ENCODE measurements at regions of chr20 and their contacts with region 1.

Region 1: GRCh38 chr20:25470045-25470444 is 62.6 kb downstream of the GINS1 start:
- DNase-seq: peak; percentile 42 to 70 (median 54)
- ATAC-seq: peak; percentile 94
- H3K4me3 ChIP-seq: no peak overlapping the region
- H3K27ac ChIP-seq: no peak overlapping the region
- H3K4me1 ChIP-seq: peaks cover 7 to 12% of the 10 kb centered on the region in 2 experiments; a peak in 4 of 5 replicates
- H3K27me3 ChIP-seq: peaks cover 2 to 10% of the 10 kb centered on the region in 2 experiments; a peak in 4 of 5 replicates
- CTCF ChIP-seq: peak; percentile 61 to 77 (median 70)
- EP300 ChIP-seq: no peak
- POLR2A ChIP-seq: no peak
- RAD21 ChIP-seq: peak; percentile 52 to 78

Region 2: GRCh38 chr20:25399037-25399430 is 71.0 kb before region 1 on chr20:
- CTCF ChIA-PET with region 1: no interaction called
- POLR2A ChIA-PET with region 1: no interaction called
- in situ Hi-C with region 1: no loop called
- intact Hi-C with region 1: no loop called
- DNase-seq: peak; percentile 21 to 60 (median 28)
- ATAC-seq: peak; percentile 87
- H3K4me3 ChIP-seq: no peak overlapping the region
- H3K27ac ChIP-seq: no peak overlapping the region
- H3K4me1 ChIP-seq: no peaks in the 10 kb centered on the region; a peak in 1 of 5 replicates
- H3K27me3 ChIP-seq: no peaks in the 10 kb centered on the region
- CTCF ChIP-seq: peak; percentile 46 to 66 (median 48); a peak in 5 of 6 replicates
- EP300 ChIP-seq: no peak
- POLR2A ChIP-seq: no peak
- RAD21 ChIP-seq: peak; percentile 68 to 80

Region 3: DNA sequence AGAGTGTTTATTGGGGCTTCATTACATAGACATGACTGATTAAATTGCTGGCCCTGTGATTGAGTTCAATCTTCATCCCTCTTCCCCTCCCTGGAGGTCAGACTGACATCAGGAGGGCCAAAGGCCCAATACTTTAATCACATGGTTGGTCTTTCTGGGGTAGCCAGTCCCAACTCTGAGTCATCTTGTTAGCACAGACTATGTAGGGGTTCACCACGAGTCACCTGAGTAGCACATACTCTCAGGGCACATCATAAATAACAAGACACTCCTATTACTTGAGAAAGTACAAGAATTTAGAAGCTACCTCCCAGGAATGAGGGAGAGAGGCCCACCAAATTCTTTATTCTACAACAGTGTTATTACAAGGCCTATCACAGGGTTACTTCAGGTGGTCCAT is 51.3 kb before region 1 on chr20:
- CTCF ChIA-PET with region 1: no interaction called
- POLR2A ChIA-PET with region 1: no interaction called
- in situ Hi-C with region 1: no loop called
- intact Hi-C with region 1: no loop called
- DNase-seq: no peak
- ATAC-seq: no peak
- H3K4me3 ChIP-seq: no peak overlapping the region
- H3K27ac ChIP-seq: no peak overlapping the region
- H3K4me1 ChIP-seq: no peaks in the 10 kb centered on the region
- H3K27me3 ChIP-seq: no peaks in the 10 kb centered on the region
- CTCF ChIP-seq: no peak
- EP300 ChIP-seq: no peak
- POLR2A ChIP-seq: no peak
- RAD21 ChIP-seq: no peak

Region 4: DNA sequence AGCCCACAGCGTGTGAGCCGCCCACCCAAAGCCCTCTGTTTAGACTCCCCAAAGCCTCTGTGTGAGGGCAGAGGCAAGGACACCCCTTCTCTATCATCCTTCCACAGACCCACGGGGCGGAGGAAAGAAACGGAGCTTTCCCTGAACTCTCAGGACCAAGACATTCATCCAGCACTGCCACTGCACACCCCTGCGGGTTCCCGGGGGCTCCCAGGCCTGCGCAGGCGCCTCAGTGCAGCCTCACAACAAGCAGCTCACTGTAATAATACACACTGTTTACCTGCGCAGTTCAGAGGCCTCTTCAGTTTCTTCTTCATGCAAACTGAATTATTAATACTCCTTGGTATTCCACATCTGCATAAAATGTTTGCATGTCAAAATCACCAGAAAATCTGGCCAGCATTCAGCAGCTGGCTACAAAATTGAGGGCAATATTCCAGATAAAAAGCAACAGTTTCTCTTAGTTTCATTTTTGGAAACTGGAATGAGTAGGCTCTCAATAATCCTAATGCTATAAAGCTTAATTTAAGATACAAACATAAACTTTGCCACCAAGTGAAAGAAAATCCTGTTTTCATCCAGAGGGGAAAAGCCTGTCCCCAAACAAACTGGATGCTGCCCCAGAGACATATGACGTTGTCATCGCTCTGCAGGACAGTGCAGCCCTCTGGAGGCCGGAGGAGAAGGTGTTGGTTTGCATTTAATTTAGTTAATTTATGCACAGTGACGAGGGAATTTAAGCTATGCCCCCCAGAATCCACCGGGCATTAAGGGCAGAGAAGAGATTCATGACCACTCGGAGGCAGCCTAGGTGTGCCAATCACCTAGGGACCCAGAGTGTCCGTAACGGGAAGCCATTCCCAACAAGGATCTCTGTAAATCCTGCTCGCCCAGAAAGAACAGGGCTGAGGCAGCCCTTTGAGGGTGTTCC is 70.0 kb after region 1 on chr20:
- CTCF ChIA-PET with region 1: no interaction called
- POLR2A ChIA-PET with region 1: no interaction called
- in situ Hi-C with region 1: no loop called
- intact Hi-C with region 1: loop called (anchors 5 kb)
- DNase-seq: peak in 2 of 4 experiments; percentile 27 to 34
- ATAC-seq: peak; percentile 79
- H3K4me3 ChIP-seq: no peak overlapping the region
- H3K27ac ChIP-seq: no peak overlapping the region
- H3K4me1 ChIP-seq: no peaks in the 10 kb centered on the region; a peak in 1 of 5 replicates
- H3K27me3 ChIP-seq: peaks cover 1 to 20% of the 10 kb centered on the region in 2 experiments; a peak in 3 of 5 replicates
- CTCF ChIP-seq: peak; percentile 43 to 53 (median 49)
- EP300 ChIP-seq: no peak
- POLR2A ChIP-seq: no peak
- RAD21 ChIP-seq: peak in 1 of 2 experiments; percentile 38; a peak in 2 of 4 replicates

Region 5: DNA sequence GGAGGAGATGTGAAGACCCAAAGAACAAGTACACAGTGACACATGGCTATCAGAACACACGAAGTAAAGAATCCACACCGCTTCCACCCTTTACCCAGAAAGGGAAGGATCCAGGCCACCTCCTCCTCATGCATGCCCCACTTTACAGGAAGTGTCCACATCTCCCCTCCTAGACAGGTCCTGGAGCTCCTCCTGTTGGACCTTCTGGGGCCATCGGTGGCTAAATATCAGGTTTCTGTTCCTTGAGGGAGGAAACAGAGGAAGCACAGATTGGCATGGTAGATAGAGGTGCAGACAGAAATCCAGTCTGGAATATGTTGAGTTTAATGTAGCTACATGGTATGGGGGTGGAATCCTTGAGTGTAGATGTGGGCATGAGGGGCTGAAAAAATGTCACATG is 104.4 kb after region 1 on chr20:
- CTCF ChIA-PET with region 1: no interaction called
- POLR2A ChIA-PET with region 1: no interaction called
- in situ Hi-C with region 1: no loop called
- intact Hi-C with region 1: loop called (anchors 10 kb)
- DNase-seq: peak in 3 of 4 experiments; percentile 9 to 23 (median 22)
- ATAC-seq: peak; percentile 72
- H3K4me3 ChIP-seq: no peak overlapping the region
- H3K27ac ChIP-seq: no peak overlapping the region
- H3K4me1 ChIP-seq: no peaks in the 10 kb centered on the region
- H3K27me3 ChIP-seq: peaks cover 0 to 21% of the 10 kb centered on the region in 2 experiments; a peak in 2 of 5 replicates
- CTCF ChIP-seq: peak; percentile 32 to 49 (median 39); a peak in 5 of 6 replicates
- EP300 ChIP-seq: no peak
- POLR2A ChIP-seq: no peak
- RAD21 ChIP-seq: peak; percentile 18 to 61; a peak in 2 of 4 replicates

Measured in K562 (cell line).